CD4-positive, alpha-beta T cell (primary cell): ENCODE measurements at regions of chr20 and their contacts with region 1.

Region 1: GRCh38 chr20:45044084-45044573 is 56.8 kb downstream of the KCNS1 start:
- DNase-seq: peak in 10 of 14 experiments; percentile 16 to 82 (median 30)
- ATAC-seq: peak; percentile 94
- H3K4me3 ChIP-seq: no peak overlapping the region
- H3K4me3 Mint-ChIP-seq: no peak overlapping the region
- H3K27ac ChIP-seq: peak overlapping the region in 1 of 2 donors; percentile 21
- H3K27ac Mint-ChIP-seq: peak overlapping the region; percentile 66
- H3K4me1 ChIP-seq: peaks cover 13% of the 10 kb centered on the region
- H3K4me1 Mint-ChIP-seq: peaks cover 81% of the 10 kb centered on the region
- H3K27me3 ChIP-seq: no peaks in the 10 kb centered on the region
- H3K27me3 Mint-ChIP-seq: no peaks in the 10 kb centered on the region
- CTCF ChIP-seq: peak; percentile 89

Region 2: DNA sequence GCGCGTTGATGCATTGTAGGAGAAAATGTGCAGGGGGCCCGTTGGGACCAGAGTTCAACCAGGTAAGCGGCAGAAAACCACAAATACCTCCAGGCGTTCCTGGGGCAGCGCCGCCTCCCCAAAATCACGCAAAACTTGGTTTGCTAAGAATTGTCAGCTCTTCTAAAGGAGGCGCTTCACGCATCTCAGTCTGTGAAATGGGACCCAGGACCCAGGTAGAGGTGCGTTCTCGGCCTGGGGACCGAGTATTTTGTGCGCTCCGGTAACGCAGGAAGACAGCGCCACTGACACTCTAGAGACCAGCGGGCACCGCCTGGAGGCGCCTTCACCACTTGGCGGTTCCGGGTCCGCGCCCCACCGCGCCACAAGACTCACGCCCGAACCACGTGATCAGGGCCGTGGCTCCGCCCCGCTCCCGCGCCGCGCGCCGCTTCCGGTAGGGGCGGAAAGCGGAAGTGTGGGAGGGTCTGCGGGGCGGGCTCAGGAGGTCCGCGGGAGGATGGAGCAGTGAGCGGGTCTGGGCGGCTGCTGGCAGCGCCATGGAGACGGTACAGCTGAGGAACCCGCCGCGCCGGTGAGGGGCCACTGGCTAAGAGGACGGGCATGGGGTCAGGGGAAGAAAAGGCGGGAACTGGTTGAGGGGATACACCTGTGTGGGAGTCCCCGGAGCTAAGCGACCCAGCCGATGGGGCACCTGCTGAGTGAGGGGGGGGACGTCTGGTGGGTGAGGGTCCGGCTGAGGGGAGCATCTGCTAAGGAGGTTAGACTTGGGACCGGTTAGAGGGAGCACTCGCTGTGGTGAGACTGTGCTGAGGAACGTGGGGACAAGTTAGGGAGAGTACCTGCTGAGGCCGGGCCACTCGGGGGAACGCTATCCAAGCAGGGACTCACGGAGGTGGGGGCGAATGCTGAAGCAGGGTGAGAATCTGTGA is 77.8 kb before region 1 on chr20 and contains the start of gene STK4:
- CTCF ChIA-PET with region 1: interaction called, 12 read pairs
- POLR2A ChIA-PET with region 1: interaction called, 3 read pairs
- intact Hi-C with region 1: no loop called
- DNase-seq: peak; percentile 92 to 99 (median 96)
- ATAC-seq: peak; percentile 78
- H3K4me3 ChIP-seq: peak within 1 kb of the TSS; percentile 68
- H3K4me3 Mint-ChIP-seq: peak within 1 kb of the TSS; percentile 92
- H3K27ac ChIP-seq: peak within 1 kb of the TSS; percentile 88 to 90
- H3K27ac Mint-ChIP-seq: peak within 1 kb of the TSS; percentile 86
- H3K4me1 ChIP-seq: peaks cover 16% of the 10 kb centered on the region
- H3K4me1 Mint-ChIP-seq: peaks cover 51% of the 10 kb centered on the region
- H3K27me3 ChIP-seq: no peaks in the 10 kb centered on the region
- H3K27me3 Mint-ChIP-seq: no peaks in the 10 kb centered on the region
- CTCF ChIP-seq: peak; percentile 70
- total RNA-seq, gene STK4: 265 to 277 TPM

Region 3: GRCh38 chr20:45020236-45020886 is 23.8 kb before region 1 on chr20:
- CTCF ChIA-PET with region 1: interaction called, 10 read pairs
- POLR2A ChIA-PET with region 1: no interaction called
- intact Hi-C with region 1: no loop called
- DNase-seq: no peak
- ATAC-seq: no peak
- H3K4me3 ChIP-seq: no peak overlapping the region
- H3K4me3 Mint-ChIP-seq: no peak overlapping the region
- H3K27ac ChIP-seq: no peak overlapping the region
- H3K27ac Mint-ChIP-seq: peak overlapping the region; percentile 18
- H3K4me1 ChIP-seq: peaks cover 7% of the 10 kb centered on the region
- H3K4me1 Mint-ChIP-seq: peaks cover 82% of the 10 kb centered on the region
- H3K27me3 ChIP-seq: no peaks in the 10 kb centered on the region
- H3K27me3 Mint-ChIP-seq: no peaks in the 10 kb centered on the region
- CTCF ChIP-seq: no peak

Region 4: GRCh38 chr20:45064812-45065211 is 20.7 kb after region 1 on chr20:
- CTCF ChIA-PET with region 1: interaction called, 11 read pairs
- POLR2A ChIA-PET with region 1: no interaction called
- intact Hi-C with region 1: no loop called
- DNase-seq: no peak
- ATAC-seq: no peak
- H3K4me3 ChIP-seq: no peak overlapping the region
- H3K4me3 Mint-ChIP-seq: no peak overlapping the region
- H3K27ac ChIP-seq: no peak overlapping the region
- H3K27ac Mint-ChIP-seq: peak overlapping the region; percentile 73
- H3K4me1 ChIP-seq: peaks cover 4% of the 10 kb centered on the region
- H3K4me1 Mint-ChIP-seq: peaks cover 87% of the 10 kb centered on the region
- H3K27me3 ChIP-seq: no peaks in the 10 kb centered on the region
- H3K27me3 Mint-ChIP-seq: no peaks in the 10 kb centered on the region
- CTCF ChIP-seq: no peak

Region 5: GRCh38 chr20:45095753-45096371 is 51.7 kb after region 1 on chr20:
- CTCF ChIA-PET with region 1: interaction called, 37 read pairs
- POLR2A ChIA-PET with region 1: interaction called, 10 read pairs
- intact Hi-C with region 1: loop called (anchors 1 kb)
- DNase-seq: peak; percentile 31 to 81 (median 46)
- ATAC-seq: peak; percentile 58
- H3K4me3 ChIP-seq: no peak overlapping the region
- H3K4me3 Mint-ChIP-seq: peak overlapping the region; percentile 15
- H3K27ac ChIP-seq: no peak overlapping the region
- H3K27ac Mint-ChIP-seq: no peak overlapping the region
- H3K4me1 ChIP-seq: peaks cover 13% of the 10 kb centered on the region
- H3K4me1 Mint-ChIP-seq: peaks cover 16% of the 10 kb centered on the region
- H3K27me3 ChIP-seq: peaks cover 25 to 43% of the 10 kb centered on the region in 2 experiments
- H3K27me3 Mint-ChIP-seq: peaks cover 44% of the 10 kb centered on the region
- CTCF ChIP-seq: peak; percentile 72